ENCODE measurements at regions of chr10 and their contacts with region 1.

Region 1: GRCh38 chr10:60434418-60435046 is 44.9 kb upstream of the ANK3 start:
- DNase-seq: peak; percentile 44 to 49
- H3K4me3 ChIP-seq: no peak overlapping the region
- H3K27ac ChIP-seq: no peak overlapping the region
- H3K4me1 ChIP-seq: peaks cover 9 to 10% of the 10 kb centered on the region in 2 donors
- H3K27me3 ChIP-seq: no peaks in the 10 kb centered on the region
- CTCF ChIP-seq: peak; percentile 39 to 89 (median 66)
- POLR2A ChIP-seq: no peak

Region 2: GRCh38 chr10:60099998-60100747 is 334.4 kb before region 1 on chr10:
- intact Hi-C with region 1: loop called (anchors 10 kb)
- DNase-seq: no peak
- H3K4me3 ChIP-seq: no peak overlapping the region
- H3K27ac ChIP-seq: peak overlapping the region in 1 of 3 donors; percentile 40
- H3K4me1 ChIP-seq: peaks cover 0 to under 1% of the 10 kb centered on the region in 2 donors
- H3K27me3 ChIP-seq: no peaks in the 10 kb centered on the region
- CTCF ChIP-seq: peak in 5 of 6 experiments; percentile 25 to 72 (median 58)
- POLR2A ChIP-seq: no peak

Region 3: GRCh38 chr10:60536529-60537114 is 102.1 kb after region 1 on chr10:
- intact Hi-C with region 1: no loop called
- DNase-seq: no peak
- H3K4me3 ChIP-seq: no peak overlapping the region
- H3K27ac ChIP-seq: no peak overlapping the region
- H3K4me1 ChIP-seq: peaks cover 27% of the 10 kb centered on the region in 2 donors
- H3K27me3 ChIP-seq: no peaks in the 10 kb centered on the region
- CTCF ChIP-seq: no peak
- POLR2A ChIP-seq: no peak